ENCODE measurements at regions of chr6 and their contacts with region 1.

Region 1: GRCh38 chr6:158231551-158232315 is 63.6 kb downstream of the GTF2H5 start:
- DNase-seq: peak; percentile 61
- H3K4me3 ChIP-seq: peak overlapping the region; percentile 82 to 84
- H3K27ac ChIP-seq: peak overlapping the region; percentile 80 to 85
- H3K4me1 ChIP-seq: no peaks in the 10 kb centered on the region
- H3K27me3 ChIP-seq: no peaks in the 10 kb centered on the region
- CTCF ChIP-seq: no peak
- POLR2A ChIP-seq: no peak

Region 2: GRCh38 chr6:158284007-158284875 is 52.5 kb after region 1 on chr6:
- intact Hi-C with region 1: loop called (anchors 5 kb)
- DNase-seq: peak; percentile 10
- H3K4me3 ChIP-seq: no peak overlapping the region
- H3K27ac ChIP-seq: peak overlapping the region in 1 of 2 donors; percentile 3
- H3K4me1 ChIP-seq: no peaks in the 10 kb centered on the region
- H3K27me3 ChIP-seq: no peaks in the 10 kb centered on the region
- CTCF ChIP-seq: no peak
- POLR2A ChIP-seq: no peak

Region 3: DNA sequence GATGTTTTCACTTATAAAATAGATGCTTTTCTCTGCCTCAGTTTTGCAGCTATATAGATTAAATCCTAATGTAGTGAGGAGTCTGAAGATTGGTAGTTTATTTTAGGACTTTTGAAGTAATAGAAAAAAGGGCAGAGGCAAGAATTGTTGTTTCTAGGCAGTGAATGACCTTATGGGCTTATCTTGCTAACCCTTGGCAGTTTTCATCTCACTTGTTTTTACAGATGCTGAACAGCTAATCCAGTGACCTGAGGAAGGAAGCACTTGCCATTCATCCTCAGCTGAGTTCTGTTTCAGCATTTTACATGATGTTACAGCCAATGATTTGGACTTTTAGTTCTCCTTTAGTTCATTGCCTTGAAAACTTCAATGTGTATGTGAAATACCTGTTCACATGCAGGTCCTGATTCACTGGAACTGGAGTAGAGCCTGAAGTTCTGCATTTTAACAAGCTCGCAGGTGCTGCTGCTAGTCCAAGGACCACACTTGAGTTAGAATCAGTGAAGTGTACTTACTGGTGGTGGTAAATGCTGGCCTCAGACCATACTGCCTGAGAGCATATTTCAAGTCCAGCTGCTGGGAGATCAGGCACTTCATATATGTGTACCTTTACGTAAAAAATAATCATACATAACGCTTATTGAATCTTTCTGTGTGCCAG is 167.4 kb after region 1 on chr6:
- intact Hi-C with region 1: no loop called
- DNase-seq: no peak
- H3K4me3 ChIP-seq: no peak overlapping the region
- H3K27ac ChIP-seq: no peak overlapping the region
- H3K4me1 ChIP-seq: no peaks in the 10 kb centered on the region
- H3K27me3 ChIP-seq: no peaks in the 10 kb centered on the region
- CTCF ChIP-seq: no peak
- POLR2A ChIP-seq: no peak

Region 4: DNA sequence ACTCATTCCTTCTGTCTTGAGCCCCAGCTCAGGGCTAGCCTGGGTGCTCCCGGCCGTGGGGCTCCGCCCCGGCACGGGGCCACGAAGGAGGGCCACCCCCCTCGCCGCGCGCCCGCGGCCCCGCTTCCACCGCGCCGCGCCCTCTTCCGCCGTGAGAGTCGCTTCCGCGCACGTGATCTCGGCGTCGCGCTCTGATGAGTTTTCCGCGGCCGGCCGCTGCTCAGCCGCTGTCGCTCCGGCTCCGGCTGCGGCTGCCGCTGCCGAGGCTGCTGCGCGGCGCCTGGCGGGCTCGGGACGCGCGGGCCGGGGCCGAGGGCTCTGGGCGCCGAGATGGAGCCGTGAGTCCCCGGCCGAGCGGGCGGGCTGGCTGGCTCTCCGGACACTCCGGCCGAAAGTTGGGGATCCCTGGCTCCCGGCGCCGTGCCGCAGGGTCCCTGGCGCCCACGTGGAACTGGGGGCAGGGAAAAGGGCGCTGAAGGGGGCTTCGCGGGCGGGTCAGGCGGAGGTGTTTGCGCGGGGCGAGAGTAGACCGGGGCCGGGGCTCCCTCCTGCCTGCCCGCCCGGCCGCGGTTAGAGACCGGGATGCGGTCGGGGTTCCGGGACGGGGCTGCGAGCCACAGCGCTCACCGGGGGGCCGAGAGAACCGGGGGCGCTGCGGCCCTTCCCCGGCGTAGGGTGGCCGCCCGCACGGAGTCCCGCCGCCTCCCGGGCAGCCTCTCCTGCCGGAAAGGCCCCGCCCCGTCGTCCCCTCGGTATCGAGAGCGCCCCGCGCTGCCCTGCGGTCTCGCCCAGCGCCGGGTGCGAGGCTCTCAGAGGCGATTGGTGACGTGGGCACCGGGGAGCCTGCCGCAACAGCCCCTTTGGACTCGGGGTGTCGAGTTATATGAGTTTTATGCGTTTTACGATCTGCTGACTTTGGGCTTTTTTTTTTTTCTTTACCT is 328.4 kb after region 1 on chr6 and contains the start of gene TMEM181:
- intact Hi-C with region 1: loop called (anchors 5 kb)
- DNase-seq: peak; percentile 76
- H3K4me3 ChIP-seq: peak within 1 kb of the TSS; percentile 83 to 97
- H3K27ac ChIP-seq: peak within 1 kb of the TSS; percentile 81 to 85
- H3K4me1 ChIP-seq: peaks cover 8% of the 10 kb centered on the region
- H3K27me3 ChIP-seq: no peaks in the 10 kb centered on the region
- CTCF ChIP-seq: peak in 1 of 4 experiments; percentile 30
- POLR2A ChIP-seq: peak; percentile 60
- total RNA-seq, gene TMEM181: 26.0 to 67.9 TPM